K562 (cell line): ENCODE measurements at regions of chr10 and their contacts with region 1.

Region 1: GRCh38 chr10:7872041-7872442 is 53.7 kb downstream of the TAF3 start:
- DNase-seq: peak; percentile 26 to 41 (median 30)
- ATAC-seq: no peak
- H3K4me3 ChIP-seq: no peak overlapping the region
- H3K27ac ChIP-seq: no peak overlapping the region
- H3K4me1 ChIP-seq: no peaks in the 10 kb centered on the region
- H3K27me3 ChIP-seq: no peaks in the 10 kb centered on the region
- CTCF ChIP-seq: peak; percentile 44 to 81 (median 50); a peak in 4 of 6 replicates
- EP300 ChIP-seq: no peak
- POLR2A ChIP-seq: no peak
- RAD21 ChIP-seq: peak; percentile 69 to 72

Region 2: DNA sequence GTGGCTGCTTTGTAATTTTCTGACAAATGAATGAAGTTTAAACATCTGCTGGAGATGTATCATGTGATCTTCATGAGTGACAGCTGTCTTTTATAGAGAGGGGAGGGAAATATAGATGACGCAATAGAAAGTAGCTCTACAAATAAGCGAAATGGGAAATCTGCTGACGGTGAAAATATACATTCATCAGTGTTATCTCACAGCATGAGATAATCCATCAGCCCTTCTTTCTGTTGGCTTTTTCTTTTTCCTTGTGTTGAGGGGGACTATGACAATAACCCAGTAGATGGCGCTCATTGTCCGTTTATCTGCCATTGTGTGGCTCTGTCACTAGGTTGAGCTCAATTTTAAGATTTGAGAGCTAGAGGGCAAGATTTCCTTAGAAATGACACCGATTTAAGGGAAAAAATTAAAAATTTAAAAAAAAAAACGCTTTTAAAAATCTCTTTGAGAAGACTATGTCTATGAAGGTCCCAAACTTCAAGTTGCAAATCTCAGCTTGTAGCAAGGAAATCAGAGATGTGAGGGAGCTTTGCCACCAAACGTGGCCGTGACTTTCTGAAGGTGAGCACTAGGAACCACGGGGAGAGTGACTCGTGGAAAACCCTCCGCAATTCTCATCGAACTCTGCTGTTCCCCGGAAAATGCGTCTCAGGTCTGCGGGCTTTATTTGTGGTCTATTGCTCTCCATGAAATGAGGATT is 346.6 kb before region 1 on chr10:
- CTCF ChIA-PET with region 1: no interaction called
- POLR2A ChIA-PET with region 1: no interaction called
- in situ Hi-C with region 1: no loop called
- intact Hi-C with region 1: loop called (anchors 10 kb)
- DNase-seq: peak; percentile 67 to 78 (median 76)
- ATAC-seq: peak; percentile 97
- H3K4me3 ChIP-seq: no peak overlapping the region
- H3K27ac ChIP-seq: no peak overlapping the region
- H3K4me1 ChIP-seq: no peaks in the 10 kb centered on the region
- H3K27me3 ChIP-seq: peaks cover 0 to 11% of the 10 kb centered on the region in 2 experiments; a peak in 4 of 5 replicates
- CTCF ChIP-seq: peak; percentile 76 to 98 (median 96)
- EP300 ChIP-seq: no peak
- POLR2A ChIP-seq: no peak
- RAD21 ChIP-seq: peak; percentile 90 to 96

Region 3: GRCh38 chr10:8026346-8027240 is 154.6 kb after region 1 on chr10:
- CTCF ChIA-PET with region 1: no interaction called
- POLR2A ChIA-PET with region 1: no interaction called
- in situ Hi-C with region 1: no loop called
- intact Hi-C with region 1: loop called (anchors 5 kb)
- DNase-seq: no peak
- ATAC-seq: peak; percentile 60
- H3K4me3 ChIP-seq: no peak overlapping the region
- H3K27ac ChIP-seq: no peak overlapping the region
- H3K4me1 ChIP-seq: no peaks in the 10 kb centered on the region
- H3K27me3 ChIP-seq: peaks cover 11 to 26% of the 10 kb centered on the region in 2 experiments
- CTCF ChIP-seq: no peak
- EP300 ChIP-seq: no peak
- POLR2A ChIP-seq: no peak
- RAD21 ChIP-seq: peak in 1 of 2 experiments; percentile 13; a peak in 1 of 4 replicates

Region 4: GRCh38 chr10:8913675-8914074 is 1041.6 kb after region 1 on chr10:
- CTCF ChIA-PET with region 1: no interaction called
- POLR2A ChIA-PET with region 1: no interaction called
- in situ Hi-C with region 1: loop called (anchors 25 kb)
- intact Hi-C with region 1: no loop called
- DNase-seq: no peak
- ATAC-seq: no peak
- H3K4me3 ChIP-seq: no peak overlapping the region
- H3K27ac ChIP-seq: no peak overlapping the region
- H3K4me1 ChIP-seq: no peaks in the 10 kb centered on the region
- H3K27me3 ChIP-seq: no peaks in the 10 kb centered on the region
- CTCF ChIP-seq: no peak
- EP300 ChIP-seq: no peak
- POLR2A ChIP-seq: no peak
- RAD21 ChIP-seq: no peak

Region 5: DNA sequence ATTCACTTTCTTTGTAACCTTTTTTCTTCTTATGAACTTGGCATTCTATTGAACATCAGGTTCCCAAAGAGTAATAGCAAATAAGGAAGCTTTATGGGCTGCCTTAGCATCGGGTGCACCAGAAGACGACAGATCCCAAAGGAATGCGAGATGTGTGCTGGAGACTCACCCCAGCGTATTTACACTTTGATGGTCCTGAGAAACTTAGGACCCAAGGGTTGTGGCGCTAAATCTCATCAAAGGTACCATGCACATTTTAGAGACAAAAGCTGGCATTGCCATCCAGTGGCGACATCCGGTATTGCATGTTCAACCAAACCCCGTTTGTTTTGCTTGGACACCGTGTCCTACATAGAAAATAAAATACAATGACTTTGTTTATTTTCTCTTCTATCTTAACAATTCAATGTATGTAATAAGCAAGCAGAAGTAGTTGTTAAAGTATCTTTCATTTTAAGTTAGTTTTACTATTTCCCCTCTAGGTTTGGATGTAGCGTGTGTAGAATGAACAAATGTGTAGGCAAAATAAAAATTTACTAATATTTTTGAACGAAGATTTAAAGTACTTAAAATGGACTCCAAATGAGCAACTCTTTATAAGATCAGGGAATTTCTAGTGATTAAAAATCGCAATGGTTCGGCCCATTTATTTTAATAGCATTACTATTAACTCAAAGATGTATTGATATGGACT is 1337.2 kb after region 1 on chr10:
- CTCF ChIA-PET with region 1: interaction called, 13 read pairs
- POLR2A ChIA-PET with region 1: no interaction called
- in situ Hi-C with region 1: no loop called
- intact Hi-C with region 1: loop called (anchors 2 kb)
- DNase-seq: peak; percentile 39 to 67 (median 46)
- ATAC-seq: peak; percentile 76
- H3K4me3 ChIP-seq: no peak overlapping the region
- H3K27ac ChIP-seq: no peak overlapping the region
- H3K4me1 ChIP-seq: no peaks in the 10 kb centered on the region
- H3K27me3 ChIP-seq: no peaks in the 10 kb centered on the region
- CTCF ChIP-seq: peak; percentile 62 to 78 (median 76)
- EP300 ChIP-seq: no peak
- POLR2A ChIP-seq: no peak
- RAD21 ChIP-seq: peak; percentile 64 to 79

Region 6: GRCh38 chr10:9302120-9302746 is 1430.2 kb after region 1 on chr10:
- CTCF ChIA-PET with region 1: interaction called, 13 read pairs
- POLR2A ChIA-PET with region 1: no interaction called
- in situ Hi-C with region 1: loop called (anchors 10 kb)
- intact Hi-C with region 1: loop called (anchors 2 kb)
- DNase-seq: peak; percentile 8 to 52 (median 46)
- ATAC-seq: peak; percentile 58; the same call in 1 of the 3 replicates
- H3K4me3 ChIP-seq: no peak overlapping the region
- H3K27ac ChIP-seq: no peak overlapping the region
- H3K4me1 ChIP-seq: no peaks in the 10 kb centered on the region
- H3K27me3 ChIP-seq: no peaks in the 10 kb centered on the region
- CTCF ChIP-seq: peak; percentile 16 to 57 (median 19); a peak in 3 of 6 replicates
- EP300 ChIP-seq: no peak
- POLR2A ChIP-seq: no peak
- RAD21 ChIP-seq: peak; percentile 61 to 68